ENCODE measurements at regions of chr9 and their contacts with region 1.

Region 1: DNA sequence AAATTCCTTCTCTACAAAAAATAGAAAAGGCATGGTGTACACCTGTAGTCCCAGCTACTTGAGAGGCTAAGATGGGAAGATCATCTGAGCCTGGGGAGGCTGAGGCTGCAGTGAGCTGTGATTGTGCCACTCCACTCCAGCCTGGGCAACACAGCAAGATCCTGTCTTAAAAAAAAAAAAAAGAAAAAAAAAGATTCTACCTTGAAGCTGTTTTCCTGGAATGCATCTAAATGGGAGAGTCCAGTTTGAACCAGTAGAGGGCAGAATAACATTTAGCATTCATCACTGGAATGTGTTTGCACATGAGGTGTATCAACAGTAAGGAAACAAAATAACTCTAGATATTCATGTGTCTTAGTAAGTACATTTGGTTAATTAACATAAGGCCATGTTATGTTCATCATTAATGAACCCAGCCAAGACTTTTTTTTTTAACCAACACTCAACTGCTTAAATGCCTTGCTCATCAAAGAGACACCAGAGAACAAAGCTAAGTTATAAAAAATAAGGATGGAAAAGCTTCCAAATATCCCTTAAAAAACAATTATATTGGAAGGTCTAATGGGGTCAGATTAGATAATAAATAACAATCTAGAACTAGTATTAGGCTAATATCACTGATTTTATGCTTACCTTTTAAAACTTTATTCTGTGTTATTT is 16.1 kb downstream of the IFNE start:
- DNase-seq: peak; percentile 27
- H3K4me3 ChIP-seq: no peak overlapping the region
- H3K27ac ChIP-seq: no peak overlapping the region
- H3K27me3 ChIP-seq: no peaks in the 10 kb centered on the region
- CTCF ChIP-seq: peak; percentile 75

Region 2: DNA sequence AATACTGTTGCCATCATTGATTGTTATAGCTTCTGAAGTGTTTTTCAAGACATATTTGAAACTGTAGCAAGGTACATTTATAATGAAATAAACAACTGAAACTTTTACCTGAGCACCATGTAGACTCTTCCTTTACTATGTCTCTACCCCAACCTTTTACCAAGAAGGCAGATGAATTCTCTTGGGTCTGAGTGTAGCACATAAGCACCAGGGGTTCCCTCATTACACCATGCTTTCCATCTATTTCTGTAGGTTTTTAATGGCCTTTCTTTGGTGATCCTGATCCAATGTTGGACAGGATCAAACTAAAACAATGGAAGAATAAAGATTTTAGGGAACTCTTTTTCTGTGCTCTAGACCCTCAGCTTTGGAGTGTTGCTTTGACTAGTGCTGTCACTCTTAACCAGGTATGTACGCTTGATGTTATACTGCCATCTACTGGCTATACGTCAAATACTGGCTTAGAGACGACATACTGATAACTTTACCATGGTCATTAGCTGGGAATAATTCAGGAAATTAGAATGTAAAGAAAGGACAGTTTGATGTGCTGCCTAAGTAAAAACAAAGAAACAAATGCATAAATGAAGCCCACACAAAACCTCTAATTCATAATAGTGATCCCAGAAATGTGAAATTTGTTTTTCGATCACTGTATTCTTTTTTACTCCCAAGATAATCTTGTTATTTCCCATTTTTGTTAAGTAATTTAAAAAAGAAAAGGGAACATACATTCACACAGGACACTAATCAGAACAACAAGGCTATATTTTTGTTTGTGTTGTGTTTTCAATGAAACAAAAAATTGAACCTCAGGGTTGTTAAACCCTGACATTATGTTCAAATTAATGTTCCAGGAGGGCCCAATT is 355.0 kb before region 1 on chr9:
- CTCF ChIA-PET with region 1: no interaction called
- POLR2A ChIA-PET with region 1: no interaction called
- DNase-seq: peak; percentile 56
- H3K4me3 ChIP-seq: no peak overlapping the region
- H3K27ac ChIP-seq: no peak overlapping the region
- H3K27me3 ChIP-seq: no peaks in the 10 kb centered on the region
- CTCF ChIP-seq: peak; percentile 91

Region 3: DNA sequence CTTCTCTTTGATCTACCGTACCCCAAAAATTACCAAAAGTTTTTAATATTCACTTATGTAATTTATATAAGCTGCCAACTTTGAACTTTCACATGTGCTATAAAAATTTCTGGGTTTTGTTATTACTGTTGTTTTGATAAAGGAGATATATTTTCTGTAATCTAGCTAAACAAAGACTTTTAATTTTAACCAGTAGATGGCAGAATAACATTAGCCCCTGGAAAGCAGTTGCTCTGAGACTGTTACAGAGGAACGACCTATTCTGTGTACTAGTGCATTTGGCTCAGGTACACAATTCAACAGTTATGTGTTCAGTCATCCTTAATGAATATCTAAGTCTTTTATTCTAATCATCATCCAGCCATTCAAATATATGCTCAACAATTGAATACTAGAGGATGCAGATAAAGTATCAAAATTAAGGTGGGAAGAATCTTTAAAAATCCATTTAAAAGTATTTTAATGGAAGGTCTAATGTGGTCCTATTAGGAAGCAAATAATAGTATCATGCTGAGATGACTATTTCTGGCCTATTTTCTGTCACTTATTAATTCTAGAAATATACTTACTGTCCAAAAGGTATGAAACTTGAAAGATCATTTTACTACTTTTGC is 139.4 kb before region 1 on chr9:
- CTCF ChIA-PET with region 1: interaction called, 14 read pairs
- POLR2A ChIA-PET with region 1: no interaction called
- DNase-seq: no peak
- H3K4me3 ChIP-seq: no peak overlapping the region
- H3K27ac ChIP-seq: no peak overlapping the region
- H3K27me3 ChIP-seq: no peaks in the 10 kb centered on the region
- CTCF ChIP-seq: peak; percentile 75

Region 4: DNA sequence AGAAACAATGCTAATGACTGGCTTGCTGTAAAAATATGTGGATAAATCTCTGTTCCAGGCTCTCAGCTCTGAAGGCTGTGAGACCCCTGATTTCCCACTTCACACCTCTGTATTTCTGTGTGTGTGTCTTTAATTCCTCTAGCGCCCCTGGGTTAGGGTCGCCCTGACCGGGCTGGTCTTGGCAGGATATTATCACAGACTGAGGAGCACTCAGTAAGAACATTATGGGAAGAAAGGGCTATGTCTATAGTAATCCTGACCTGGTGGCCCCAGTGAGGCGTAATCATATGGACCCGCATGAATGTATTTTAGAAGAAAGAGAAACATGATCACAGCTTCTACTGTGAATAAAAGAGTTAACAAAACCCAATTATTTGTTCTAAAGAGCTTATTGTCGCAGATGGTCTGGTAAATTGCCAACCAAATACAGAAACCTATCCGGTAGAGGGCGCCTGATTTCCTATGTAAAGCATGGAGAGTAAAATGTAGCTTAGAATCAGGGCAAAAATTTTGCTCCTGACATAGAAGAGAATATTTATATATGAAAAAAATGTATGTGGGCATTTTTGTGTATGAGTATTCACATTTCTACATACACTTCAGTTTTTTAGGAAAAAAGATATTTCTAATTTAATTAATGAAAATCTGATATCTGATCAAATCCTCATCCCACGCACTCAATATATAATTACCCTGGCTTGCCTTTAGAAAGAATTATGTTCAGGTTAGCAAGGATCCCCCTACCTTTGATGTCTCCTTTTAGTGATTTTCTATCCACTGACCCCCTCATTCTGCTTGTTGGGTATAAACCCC is 31.6 kb before region 1 on chr9:
- CTCF ChIA-PET with region 1: interaction called, 34 read pairs
- POLR2A ChIA-PET with region 1: no interaction called
- DNase-seq: peak; percentile 52
- H3K4me3 ChIP-seq: no peak overlapping the region
- H3K27ac ChIP-seq: no peak overlapping the region
- H3K27me3 ChIP-seq: no peaks in the 10 kb centered on the region
- CTCF ChIP-seq: peak; percentile 73

Region 5: DNA sequence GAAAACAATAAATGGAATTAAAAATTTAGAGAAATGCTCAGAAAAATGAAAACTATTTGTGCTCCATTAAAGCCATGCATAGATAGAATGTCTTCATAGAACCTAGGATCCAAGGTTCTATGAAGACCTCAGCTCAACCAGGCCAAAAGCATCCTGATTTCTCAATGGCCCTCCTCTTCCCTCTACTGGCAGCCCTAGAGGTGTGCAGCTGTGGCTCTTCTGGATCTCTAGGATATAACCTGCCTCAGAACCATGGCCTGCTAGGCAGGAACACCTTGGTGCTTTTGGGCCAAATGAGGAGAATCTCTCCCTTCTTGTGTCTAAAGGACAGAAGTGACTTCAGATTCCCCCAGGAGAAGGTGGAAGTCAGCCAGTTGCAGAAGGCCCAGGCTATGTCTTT is 10.7 kb before region 1 on chr9:
- CTCF ChIA-PET with region 1: interaction called, 32 read pairs
- POLR2A ChIA-PET with region 1: no interaction called
- DNase-seq: no peak
- H3K4me3 ChIP-seq: no peak overlapping the region
- H3K27ac ChIP-seq: no peak overlapping the region
- H3K27me3 ChIP-seq: no peaks in the 10 kb centered on the region
- CTCF ChIP-seq: peak; percentile 69

Region 6: DNA sequence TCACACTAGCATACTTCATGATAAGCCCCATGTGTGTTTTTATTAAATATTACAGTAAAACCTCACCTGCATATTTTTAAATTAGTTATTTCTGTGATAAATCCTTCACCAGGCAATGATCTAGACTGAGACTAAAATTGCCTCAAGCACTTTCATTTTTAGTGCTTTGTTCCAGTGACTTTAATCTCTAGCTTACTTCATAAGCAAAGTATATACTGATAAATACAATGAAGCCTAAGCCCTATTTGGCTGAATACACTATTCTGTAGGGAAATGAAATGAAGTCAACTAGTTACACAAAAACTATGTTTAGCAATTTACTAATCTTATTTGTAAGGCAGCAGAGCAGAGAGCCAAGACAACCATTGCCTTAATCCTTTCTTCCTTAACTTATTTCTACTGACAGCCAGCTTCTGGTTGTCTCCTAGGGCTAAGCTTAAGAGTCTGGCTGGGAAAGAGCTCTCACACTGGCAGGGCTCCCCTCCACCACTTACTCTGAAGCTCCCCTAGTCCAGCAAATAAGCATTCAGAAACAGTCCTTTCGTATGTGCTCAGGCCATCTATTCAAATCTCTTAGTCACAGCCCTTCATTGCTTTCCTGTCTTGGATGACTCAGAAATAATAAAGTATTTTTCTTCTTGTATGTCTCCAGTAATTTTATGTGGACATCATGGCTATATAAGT is 305.0 kb after region 1 on chr9:
- CTCF ChIA-PET with region 1: interaction called, 11 read pairs
- POLR2A ChIA-PET with region 1: no interaction called
- DNase-seq: peak; percentile 34
- H3K4me3 ChIP-seq: no peak overlapping the region
- H3K27ac ChIP-seq: peak overlapping the region; percentile 66
- H3K27me3 ChIP-seq: no peaks in the 10 kb centered on the region
- CTCF ChIP-seq: no peak

Region 7: GRCh38 chr9:21789541-21790037 is 323.6 kb after region 1 on chr9:
- CTCF ChIA-PET with region 1: interaction called, 107 read pairs
- POLR2A ChIA-PET with region 1: no interaction called
- DNase-seq: peak; percentile 88
- H3K4me3 ChIP-seq: peak overlapping the region; percentile 49
- H3K27ac ChIP-seq: no peak overlapping the region
- H3K27me3 ChIP-seq: no peaks in the 10 kb centered on the region
- CTCF ChIP-seq: peak; percentile 68